ENCODE measurements at regions of chr2 and their contacts with region 1.

Region 1: GRCh38 chr2:118003396-118003824 is 10.5 kb downstream of the CCDC93 start:
- DNase-seq: peak; percentile 71
- ATAC-seq: peak; percentile 98
- H3K4me3 Mint-ChIP-seq: no peak overlapping the region
- H3K27ac Mint-ChIP-seq: no peak overlapping the region
- H3K4me1 Mint-ChIP-seq: peaks cover 7% of the 10 kb centered on the region
- H3K27me3 Mint-ChIP-seq: no peaks in the 10 kb centered on the region

Region 2: GRCh38 chr2:117738991-117739839 is 264.2 kb before region 1 on chr2:
- CTCF ChIA-PET with region 1: no interaction called
- POLR2A ChIA-PET with region 1: no interaction called
- DNase-seq: no peak
- ATAC-seq: no peak
- H3K4me3 Mint-ChIP-seq: no peak overlapping the region
- H3K27ac Mint-ChIP-seq: no peak overlapping the region
- H3K4me1 Mint-ChIP-seq: no peaks in the 10 kb centered on the region
- H3K27me3 Mint-ChIP-seq: no peaks in the 10 kb centered on the region

Region 3: DNA sequence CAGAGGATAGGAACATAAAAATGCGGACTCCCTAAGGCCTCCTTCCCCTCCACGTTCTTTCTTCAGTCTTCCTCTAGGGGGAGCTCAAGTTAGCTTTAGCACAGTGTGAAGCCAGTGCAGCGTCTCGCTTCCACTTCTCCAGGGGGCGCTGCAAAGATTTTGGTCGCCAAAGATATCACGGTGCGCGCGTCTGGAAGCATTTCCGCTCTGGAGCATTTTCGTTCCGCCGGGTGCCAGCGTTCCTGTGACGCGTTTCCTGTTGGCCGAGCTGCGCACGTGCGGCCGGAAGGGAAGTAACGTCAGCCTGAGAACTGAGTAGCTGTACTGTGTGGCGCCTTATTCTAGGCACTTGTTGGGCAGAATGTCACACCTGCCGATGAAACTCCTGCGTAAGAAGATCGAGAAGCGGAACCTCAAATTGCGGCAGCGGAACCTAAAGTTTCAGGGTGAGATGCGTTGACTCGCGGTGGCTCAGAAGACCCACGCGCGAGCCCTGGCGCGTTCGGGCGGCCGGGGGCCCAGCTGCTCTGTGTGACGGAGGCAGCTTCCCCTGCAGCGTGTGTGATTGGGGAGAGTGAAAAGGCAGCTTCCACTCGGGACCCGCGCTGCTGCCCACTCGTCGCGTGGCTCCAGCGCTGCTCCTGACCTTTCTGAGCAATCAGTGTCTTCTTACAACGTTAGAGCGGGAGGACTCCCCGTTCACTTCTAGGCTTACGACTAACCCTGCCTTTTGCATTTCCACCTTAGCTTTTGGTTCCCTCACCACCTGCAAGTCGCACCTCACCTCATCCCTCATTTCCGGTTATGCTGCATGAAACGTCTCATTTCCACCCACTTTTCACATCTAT is 188.8 kb before region 1 on chr2 and contains the start of gene DDX18:
- CTCF ChIA-PET with region 1: interaction called, 107 read pairs
- POLR2A ChIA-PET with region 1: no interaction called
- DNase-seq: peak; percentile 98
- ATAC-seq: peak; percentile 94
- H3K4me3 Mint-ChIP-seq: peak within 1 kb of the TSS; percentile 85
- H3K27ac Mint-ChIP-seq: peak within 1 kb of the TSS; percentile 94
- H3K4me1 Mint-ChIP-seq: peaks cover 43% of the 10 kb centered on the region
- H3K27me3 Mint-ChIP-seq: no peaks in the 10 kb centered on the region
- total RNA-seq, gene DDX18: 73.0 to 77.7 TPM

Region 4: GRCh38 chr2:117879003-117879402 is 124.4 kb before region 1 on chr2:
- CTCF ChIA-PET with region 1: no interaction called
- POLR2A ChIA-PET with region 1: no interaction called
- DNase-seq: no peak
- ATAC-seq: no peak
- H3K4me3 Mint-ChIP-seq: no peak overlapping the region
- H3K27ac Mint-ChIP-seq: no peak overlapping the region
- H3K4me1 Mint-ChIP-seq: no peaks in the 10 kb centered on the region
- H3K27me3 Mint-ChIP-seq: no peaks in the 10 kb centered on the region

Region 5: GRCh38 chr2:117949806-117950205 is 53.6 kb before region 1 on chr2:
- CTCF ChIA-PET with region 1: interaction called, 10 read pairs
- POLR2A ChIA-PET with region 1: no interaction called
- DNase-seq: no peak
- ATAC-seq: no peak
- H3K4me3 Mint-ChIP-seq: no peak overlapping the region
- H3K27ac Mint-ChIP-seq: no peak overlapping the region
- H3K4me1 Mint-ChIP-seq: no peaks in the 10 kb centered on the region
- H3K27me3 Mint-ChIP-seq: no peaks in the 10 kb centered on the region

Region 6: DNA sequence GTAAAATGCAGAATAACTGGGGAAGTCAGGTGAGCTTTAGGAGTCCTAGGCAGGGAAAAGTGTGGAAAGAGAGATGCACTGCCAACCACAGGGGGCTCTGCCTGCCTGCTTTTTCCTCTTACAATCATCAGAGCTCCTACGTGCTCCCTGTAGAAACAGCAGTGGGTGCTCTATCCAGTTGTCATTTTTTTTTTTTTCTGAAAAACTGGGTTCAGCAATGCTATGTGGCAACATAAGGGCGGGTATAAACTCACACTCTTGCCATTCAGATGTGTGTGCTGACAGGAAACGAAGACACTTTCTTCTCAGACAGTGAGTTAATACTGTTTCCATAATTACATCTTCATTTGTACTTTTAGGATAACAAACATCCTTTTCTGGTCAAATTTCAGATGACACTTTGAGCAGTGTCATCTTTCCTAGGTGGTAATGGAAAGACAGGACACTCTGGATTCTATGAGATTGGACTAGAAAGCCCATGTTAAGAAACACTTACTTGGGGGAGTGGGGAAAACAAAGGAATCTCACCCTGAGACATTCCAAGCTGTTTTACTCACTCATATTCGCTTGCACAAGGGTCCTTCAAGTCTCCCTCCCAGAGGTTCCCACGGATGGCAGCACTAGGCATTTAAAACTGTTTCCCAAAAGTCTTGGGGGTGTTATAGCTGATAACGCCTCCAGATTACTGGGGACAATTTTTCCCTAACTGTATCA is 30.8 kb before region 1 on chr2:
- CTCF ChIA-PET with region 1: interaction called, 10 read pairs
- POLR2A ChIA-PET with region 1: no interaction called
- DNase-seq: no peak
- ATAC-seq: no peak
- H3K4me3 Mint-ChIP-seq: no peak overlapping the region
- H3K27ac Mint-ChIP-seq: no peak overlapping the region
- H3K4me1 Mint-ChIP-seq: no peaks in the 10 kb centered on the region
- H3K27me3 Mint-ChIP-seq: no peaks in the 10 kb centered on the region

Region 7: GRCh38 chr2:118013724-118014491 is 10.5 kb after region 1 on chr2 and contains the start of gene CCDC93:
- CTCF ChIA-PET with region 1: interaction called, 55 read pairs
- POLR2A ChIA-PET with region 1: interaction called, 9 read pairs
- DNase-seq: peak; percentile 87
- ATAC-seq: peak; percentile 90
- H3K4me3 Mint-ChIP-seq: peak within 1 kb of the TSS; percentile 88
- H3K27ac Mint-ChIP-seq: peak within 1 kb of the TSS; percentile 86
- H3K4me1 Mint-ChIP-seq: peaks cover 39% of the 10 kb centered on the region
- H3K27me3 Mint-ChIP-seq: peaks cover 5% of the 10 kb centered on the region
- total RNA-seq, gene CCDC93: 31.7 to 34.3 TPM

Region 8: DNA sequence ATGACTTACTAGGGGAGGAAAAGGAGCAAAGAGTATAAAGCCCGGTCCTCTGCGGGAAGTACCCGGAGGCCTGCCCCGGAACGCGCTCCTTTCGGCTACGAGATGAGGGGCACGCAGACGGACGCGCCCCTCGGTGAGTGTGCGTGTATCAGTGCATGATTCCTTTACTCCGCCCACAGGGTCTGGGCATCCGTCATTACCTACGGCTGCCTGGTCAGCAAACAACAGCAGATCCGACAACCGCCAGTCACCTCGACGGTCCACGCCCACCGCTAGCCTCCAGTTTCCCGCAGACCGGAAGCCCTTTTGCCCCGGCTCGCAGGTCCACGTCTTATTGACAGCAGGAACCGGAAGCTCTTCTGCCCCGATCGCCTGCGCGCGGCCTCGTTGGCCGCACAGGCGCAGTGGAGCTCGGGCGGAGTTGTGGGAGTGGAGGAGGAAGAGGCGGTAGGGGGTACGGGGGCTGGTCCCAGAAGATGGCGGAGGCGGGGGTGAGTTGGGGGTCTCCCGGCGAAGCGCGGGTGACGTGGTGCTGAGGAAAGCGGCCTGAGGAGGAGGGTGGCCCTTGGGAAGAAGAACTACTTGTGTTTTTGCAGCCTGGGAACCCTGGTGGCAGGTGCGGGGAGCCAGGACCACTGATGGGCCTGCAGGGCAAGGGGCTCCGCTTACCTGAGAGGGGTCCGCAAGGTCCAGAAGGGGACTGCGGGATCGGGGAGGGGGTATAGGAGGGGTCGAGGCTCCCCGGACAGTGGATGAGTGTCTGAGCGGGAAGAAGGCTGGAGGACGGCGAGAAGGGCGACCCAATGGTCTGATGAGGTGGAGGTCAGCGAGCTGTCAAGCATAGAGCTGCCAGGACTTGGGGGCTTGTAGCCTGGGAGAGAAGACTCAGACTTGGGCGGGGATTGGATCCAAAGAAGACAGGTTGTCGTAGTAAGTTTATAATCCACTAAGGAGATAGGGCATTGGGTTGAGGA is 84.9 kb after region 1 on chr2 and contains the start of gene INSIG2:
- CTCF ChIA-PET with region 1: interaction called, 11 read pairs
- POLR2A ChIA-PET with region 1: no interaction called
- DNase-seq: peak; percentile 96
- ATAC-seq: peak; percentile 95
- H3K4me3 Mint-ChIP-seq: peak within 1 kb of the TSS; percentile 92
- H3K27ac Mint-ChIP-seq: peak within 1 kb of the TSS; percentile 89
- H3K4me1 Mint-ChIP-seq: peaks cover 25% of the 10 kb centered on the region
- H3K27me3 Mint-ChIP-seq: peaks cover 11% of the 10 kb centered on the region
- total RNA-seq, gene INSIG2: 30.1 to 32.6 TPM

Region 9: DNA sequence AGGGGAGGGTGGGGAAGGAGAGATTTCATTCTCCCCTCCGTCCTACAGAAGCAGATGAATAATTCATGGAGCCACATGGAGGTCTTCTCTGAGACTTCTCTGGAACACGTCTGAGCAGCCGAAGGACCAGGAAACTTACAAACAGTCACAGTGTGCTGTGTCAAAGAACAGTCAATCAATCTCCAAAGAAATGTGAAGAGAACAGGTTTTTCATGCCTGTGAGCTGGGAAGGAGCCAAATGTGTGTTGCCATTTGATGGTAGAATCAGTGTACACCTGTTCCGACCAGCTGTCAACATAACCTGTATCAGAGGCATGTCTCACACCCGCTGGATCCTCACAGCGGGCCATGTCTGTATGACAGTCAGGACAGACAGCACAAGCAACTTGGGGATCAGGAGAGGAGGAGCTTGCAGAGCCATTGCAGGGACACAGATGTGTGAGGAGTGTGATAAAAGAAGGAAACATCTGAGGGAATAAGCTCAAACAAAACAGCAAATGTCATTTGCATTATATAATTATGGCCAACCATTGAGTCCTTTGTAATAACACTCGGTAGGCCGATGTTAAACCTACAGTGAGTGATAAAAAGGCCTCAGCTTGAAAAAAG is 545.6 kb after region 1 on chr2:
- CTCF ChIA-PET with region 1: no interaction called
- POLR2A ChIA-PET with region 1: no interaction called
- DNase-seq: no peak
- ATAC-seq: no peak
- H3K4me3 Mint-ChIP-seq: no peak overlapping the region
- H3K27ac Mint-ChIP-seq: no peak overlapping the region
- H3K4me1 Mint-ChIP-seq: no peaks in the 10 kb centered on the region
- H3K27me3 Mint-ChIP-seq: no peaks in the 10 kb centered on the region

Measured in activated CD8-positive, alpha-beta T cell treated with anti-CD3 and anti-CD28 coated beads, Interleukin-2, amount 10 ng/mL, durations not matched to agents 7 days and 5 days (primary cell).